Naive thymus-derived CD4-positive, alpha-beta T cell (primary cell): ENCODE measurements at regions of chr17 and their contacts with region 1.

Region 1: GRCh38 chr17:60641810-60642220 is 35.8 kb upstream of the BCAS3 start:
- DNase-seq: peak in 8 of 9 donors; percentile 22 to 63 (median 50)
- ATAC-seq: peak; percentile 49
- H3K4me3 ChIP-seq: no peak overlapping the region
- H3K4me3 Mint-ChIP-seq: no peak overlapping the region
- H3K27ac ChIP-seq: no peak overlapping the region
- H3K27ac Mint-ChIP-seq: peak overlapping the region in 1 of 9 donors; percentile 46
- H3K4me1 ChIP-seq: no peaks in the 10 kb centered on the region
- H3K4me1 Mint-ChIP-seq: peaks cover 4 to 22% (median 14%) of the 10 kb centered on the region in 7 donors
- H3K27me3 ChIP-seq: no peaks in the 10 kb centered on the region
- H3K27me3 Mint-ChIP-seq: no peaks in the 10 kb centered on the region

Region 2: GRCh38 chr17:60421273-60421934 is 220.4 kb before region 1 on chr17:
- CTCF ChIA-PET with region 1: interaction called, 4 read pairs
- POLR2A ChIA-PET with region 1: no interaction called
- intact Hi-C with region 1: loop called (anchors 1 kb)
- DNase-seq: peak; percentile 52 to 77 (median 68)
- ATAC-seq: peak; percentile 95
- H3K4me3 ChIP-seq: peak overlapping the region; percentile 63
- H3K4me3 Mint-ChIP-seq: peak overlapping the region; percentile 59 to 88 (median 80)
- H3K27ac ChIP-seq: peak overlapping the region; percentile 38
- H3K27ac Mint-ChIP-seq: peak overlapping the region in 8 of 9 donors; percentile 17 to 82 (median 76)
- H3K4me1 ChIP-seq: peaks cover 4% of the 10 kb centered on the region in 2 donors
- H3K4me1 Mint-ChIP-seq: peaks cover 0 to 11% (median 10%) of the 10 kb centered on the region in 7 donors
- H3K27me3 ChIP-seq: no peaks in the 10 kb centered on the region
- H3K27me3 Mint-ChIP-seq: peaks cover 0 to 7% (median 0%) of the 10 kb centered on the region in 5 donors

Region 3: DNA sequence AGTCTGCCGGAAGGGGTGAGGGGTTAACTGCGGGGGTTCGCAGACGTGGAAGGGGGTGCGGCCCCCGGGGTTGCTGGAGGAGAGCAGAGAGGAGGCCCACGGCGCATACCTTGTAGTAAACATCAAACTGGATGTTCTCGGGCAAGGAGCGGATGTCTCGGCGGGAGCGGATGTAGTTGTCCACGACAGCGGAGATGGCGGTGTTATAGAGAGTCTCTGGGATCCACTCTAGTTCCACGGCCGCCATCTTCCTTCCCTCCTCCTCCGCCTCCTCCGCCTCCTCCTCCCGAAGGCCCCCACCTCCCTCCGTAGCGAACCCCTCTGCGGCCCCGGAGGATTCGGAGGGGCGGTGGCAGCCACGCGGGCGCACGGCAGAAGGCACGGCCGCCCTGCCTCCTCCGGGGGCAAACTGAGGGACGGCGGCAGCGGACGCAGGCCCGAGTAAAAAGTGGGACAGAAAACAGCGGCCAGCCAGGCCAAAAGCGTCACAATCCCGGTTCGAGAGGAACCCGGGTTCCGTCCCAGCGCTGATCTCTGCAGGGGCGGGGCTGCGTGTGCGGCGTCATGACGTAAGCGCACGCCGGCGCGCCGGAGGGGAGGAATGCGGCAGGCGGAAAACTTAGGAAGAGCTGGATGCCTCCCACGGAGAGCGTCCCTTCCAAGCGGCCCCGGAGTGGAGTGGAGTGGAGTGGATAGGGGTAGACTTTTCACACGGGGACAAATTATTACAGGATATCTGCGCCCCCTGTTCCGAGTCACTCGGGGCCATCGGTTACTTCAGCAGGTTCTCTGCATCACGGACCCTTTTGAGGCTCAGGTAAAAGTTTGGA is 115.9 kb before region 1 on chr17 and contains the start of gene APPBP2:
- CTCF ChIA-PET with region 1: interaction called, 3 read pairs
- POLR2A ChIA-PET with region 1: no interaction called
- intact Hi-C with region 1: loop called in 1 of 2 experiments (anchors 5 kb)
- DNase-seq: peak; percentile 59 to 80 (median 77)
- ATAC-seq: peak; percentile 92
- H3K4me3 ChIP-seq: peak within 1 kb of the TSS; percentile 86
- H3K4me3 Mint-ChIP-seq: peak within 1 kb of the TSS; percentile 98 to 100 (median 99)
- H3K27ac ChIP-seq: peak within 1 kb of the TSS; percentile 99
- H3K27ac Mint-ChIP-seq: peak within 1 kb of the TSS; percentile 96 to 99 (median 98)
- H3K4me1 ChIP-seq: peaks cover 19 to 25% of the 10 kb centered on the region in 2 donors
- H3K4me1 Mint-ChIP-seq: peaks cover 31 to 63% (median 55%) of the 10 kb centered on the region in 7 donors
- H3K27me3 ChIP-seq: no peaks in the 10 kb centered on the region
- H3K27me3 Mint-ChIP-seq: no peaks in the 10 kb centered on the region
- total RNA-seq, gene APPBP2: 24.2 to 47.5 (median 33.0) TPM

Region 4: GRCh38 chr17:60568561-60568960 is 73.3 kb before region 1 on chr17:
- CTCF ChIA-PET with region 1: interaction called, 5 read pairs
- POLR2A ChIA-PET with region 1: no interaction called
- intact Hi-C with region 1: loop called in 1 of 2 experiments (anchors 2 kb)
- DNase-seq: no peak
- ATAC-seq: no peak
- H3K4me3 ChIP-seq: no peak overlapping the region
- H3K4me3 Mint-ChIP-seq: no peak overlapping the region
- H3K27ac ChIP-seq: no peak overlapping the region
- H3K27ac Mint-ChIP-seq: no peak overlapping the region
- H3K4me1 ChIP-seq: no peaks in the 10 kb centered on the region
- H3K4me1 Mint-ChIP-seq: peaks cover 0 to 9% (median 0%) of the 10 kb centered on the region in 7 donors
- H3K27me3 ChIP-seq: no peaks in the 10 kb centered on the region
- H3K27me3 Mint-ChIP-seq: peaks cover 0 to 17% (median 4%) of the 10 kb centered on the region in 5 donors

Region 5: DNA sequence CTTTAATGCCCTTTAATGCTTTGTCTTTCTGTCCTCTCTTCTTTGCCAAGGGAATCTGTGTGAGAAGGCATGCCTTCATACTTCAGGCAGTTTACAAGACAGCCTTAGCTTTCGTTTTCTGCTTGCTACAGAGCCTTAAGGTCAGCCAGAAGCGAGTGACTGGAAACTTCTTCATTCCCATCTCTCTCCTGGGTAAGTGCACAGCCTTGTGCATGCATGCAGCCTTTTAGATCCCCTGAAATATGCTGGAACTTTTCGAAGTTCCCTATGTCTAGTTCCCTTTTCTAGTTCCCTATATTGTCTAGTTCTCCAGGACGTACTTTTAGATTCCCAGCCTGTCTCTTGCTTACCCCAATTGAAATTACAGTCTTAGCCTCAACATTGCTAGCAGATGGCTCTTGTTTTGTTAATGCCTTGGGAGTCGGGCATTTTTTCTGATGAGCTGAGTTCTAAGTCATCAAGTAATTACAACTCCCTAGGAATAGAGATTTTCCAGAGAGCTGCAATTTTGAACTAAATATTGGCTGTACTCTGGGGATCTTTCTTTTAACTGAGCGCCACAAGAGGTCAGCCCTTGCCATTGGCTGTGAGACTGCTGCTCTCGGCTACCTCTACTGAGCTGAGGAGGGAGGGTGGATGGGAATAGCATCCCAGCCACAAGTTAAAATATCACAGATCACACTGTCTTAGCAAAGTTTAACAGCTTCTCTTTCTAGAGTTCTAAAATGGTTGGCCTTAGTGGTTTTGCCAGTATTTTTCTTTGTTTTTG is 64.5 kb before region 1 on chr17:
- CTCF ChIA-PET with region 1: interaction called, 23 read pairs
- POLR2A ChIA-PET with region 1: no interaction called
- intact Hi-C with region 1: loop called (anchors 1 to 2 kb)
- DNase-seq: peak in 4 of 9 donors; percentile 4 to 14 (median 10)
- ATAC-seq: peak; percentile 70
- H3K4me3 ChIP-seq: peak overlapping the region; percentile 47
- H3K4me3 Mint-ChIP-seq: peak overlapping the region; percentile 49 to 92 (median 84)
- H3K27ac ChIP-seq: no peak overlapping the region
- H3K27ac Mint-ChIP-seq: peak overlapping the region in 6 of 9 donors; percentile 6 to 47 (median 32)
- H3K4me1 ChIP-seq: no peaks in the 10 kb centered on the region
- H3K4me1 Mint-ChIP-seq: peaks cover 3 to 10% (median 8%) of the 10 kb centered on the region in 7 donors
- H3K27me3 ChIP-seq: no peaks in the 10 kb centered on the region
- H3K27me3 Mint-ChIP-seq: peaks cover 0 to 3% (median 0%) of the 10 kb centered on the region in 5 donors

Region 6: DNA sequence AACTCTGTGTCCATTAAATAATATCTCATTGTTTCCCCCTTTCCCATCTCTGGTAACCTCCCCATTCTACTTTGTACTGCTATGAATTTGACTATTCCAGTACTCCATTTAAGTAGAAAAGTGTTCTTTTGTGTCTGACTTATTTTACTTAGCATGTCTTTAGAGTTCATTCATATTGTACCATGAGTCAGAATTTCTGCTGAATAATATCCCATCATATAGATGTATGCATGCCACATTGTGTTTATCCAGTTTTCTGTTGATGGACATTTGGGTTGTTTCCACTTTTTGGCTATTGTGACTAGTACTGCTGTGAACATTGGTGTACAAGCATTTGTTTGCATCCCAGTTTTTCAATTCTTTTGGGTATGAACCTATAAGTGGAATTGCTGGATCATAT is 35.8 kb before region 1 on chr17:
- CTCF ChIA-PET with region 1: no interaction called
- POLR2A ChIA-PET with region 1: no interaction called
- intact Hi-C with region 1: no loop called
- DNase-seq: no peak
- ATAC-seq: no peak
- H3K4me3 ChIP-seq: no peak overlapping the region
- H3K4me3 Mint-ChIP-seq: peak overlapping the region in 2 of 10 donors; percentile 18 to 42
- H3K27ac ChIP-seq: no peak overlapping the region
- H3K27ac Mint-ChIP-seq: peak overlapping the region in 1 of 9 donors; percentile 63
- H3K4me1 ChIP-seq: peaks cover 0 to 14% of the 10 kb centered on the region in 2 donors
- H3K4me1 Mint-ChIP-seq: peaks cover 31 to 80% (median 62%) of the 10 kb centered on the region in 7 donors
- H3K27me3 ChIP-seq: no peaks in the 10 kb centered on the region
- H3K27me3 Mint-ChIP-seq: no peaks in the 10 kb centered on the region